ENCODE measurements at regions of chr1 and their contacts with region 1.

Region 1: GRCh38 chr1:27872059-27872801 is at the start of gene THEMIS2:
- DNase-seq: peak; percentile 58 to 86 (median 81)
- ATAC-seq: peak; percentile 83
- H3K4me3 ChIP-seq: peak within 1 kb of the TSS; percentile 83 to 100
- H3K4me3 Mint-ChIP-seq: peak within 1 kb of the TSS; percentile 98
- H3K27ac ChIP-seq: peak within 1 kb of the TSS; percentile 47 to 61
- H3K27ac Mint-ChIP-seq: peak within 1 kb of the TSS; percentile 89
- H3K4me1 ChIP-seq: peaks cover 46% of the 10 kb centered on the region
- H3K4me1 Mint-ChIP-seq: peaks cover 49% of the 10 kb centered on the region
- H3K27me3 ChIP-seq: no peaks in the 10 kb centered on the region
- H3K27me3 Mint-ChIP-seq: no peaks in the 10 kb centered on the region
- CTCF ChIP-seq: no peak
- total RNA-seq, gene THEMIS2: 13.4 to 15.2 TPM

Region 2: GRCh38 chr1:27725374-27726173 is 146.7 kb before region 1 on chr1 and contains the start of gene FAM76A:
- CTCF ChIA-PET with region 1: no interaction called
- POLR2A ChIA-PET with region 1: no interaction called
- intact Hi-C with region 1: no loop called
- DNase-seq: peak; percentile 99 to 100 (median 99)
- ATAC-seq: peak; percentile 92
- H3K4me3 ChIP-seq: peak within 1 kb of the TSS; percentile 63 to 92
- H3K4me3 Mint-ChIP-seq: peak within 1 kb of the TSS; percentile 84
- H3K27ac ChIP-seq: peak within 1 kb of the TSS; percentile 94 to 96
- H3K27ac Mint-ChIP-seq: peak within 1 kb of the TSS; percentile 94
- H3K4me1 ChIP-seq: peaks cover 15% of the 10 kb centered on the region
- H3K4me1 Mint-ChIP-seq: peaks cover 26% of the 10 kb centered on the region
- H3K27me3 ChIP-seq: no peaks in the 10 kb centered on the region
- H3K27me3 Mint-ChIP-seq: no peaks in the 10 kb centered on the region
- CTCF ChIP-seq: peak; percentile 25
- total RNA-seq, gene FAM76A: 29.5 to 31.7 TPM

Region 3: GRCh38 chr1:27772933-27773825 is 99.1 kb before region 1 on chr1 and contains the start of gene STX12:
- CTCF ChIA-PET with region 1: no interaction called
- POLR2A ChIA-PET with region 1: no interaction called
- intact Hi-C with region 1: no loop called
- DNase-seq: peak; percentile 96 to 100 (median 98)
- ATAC-seq: peak; percentile 91
- H3K4me3 ChIP-seq: peak within 1 kb of the TSS; percentile 94 to 98
- H3K4me3 Mint-ChIP-seq: peak within 1 kb of the TSS; percentile 91
- H3K27ac ChIP-seq: peak within 1 kb of the TSS; percentile 76 to 94
- H3K27ac Mint-ChIP-seq: peak within 1 kb of the TSS; percentile 98
- H3K4me1 ChIP-seq: peaks cover 16% of the 10 kb centered on the region
- H3K4me1 Mint-ChIP-seq: peaks cover 37% of the 10 kb centered on the region
- H3K27me3 ChIP-seq: no peaks in the 10 kb centered on the region
- H3K27me3 Mint-ChIP-seq: no peaks in the 10 kb centered on the region
- CTCF ChIP-seq: no peak
- total RNA-seq, gene STX12: 21.0 to 26.0 TPM

Region 4: DNA sequence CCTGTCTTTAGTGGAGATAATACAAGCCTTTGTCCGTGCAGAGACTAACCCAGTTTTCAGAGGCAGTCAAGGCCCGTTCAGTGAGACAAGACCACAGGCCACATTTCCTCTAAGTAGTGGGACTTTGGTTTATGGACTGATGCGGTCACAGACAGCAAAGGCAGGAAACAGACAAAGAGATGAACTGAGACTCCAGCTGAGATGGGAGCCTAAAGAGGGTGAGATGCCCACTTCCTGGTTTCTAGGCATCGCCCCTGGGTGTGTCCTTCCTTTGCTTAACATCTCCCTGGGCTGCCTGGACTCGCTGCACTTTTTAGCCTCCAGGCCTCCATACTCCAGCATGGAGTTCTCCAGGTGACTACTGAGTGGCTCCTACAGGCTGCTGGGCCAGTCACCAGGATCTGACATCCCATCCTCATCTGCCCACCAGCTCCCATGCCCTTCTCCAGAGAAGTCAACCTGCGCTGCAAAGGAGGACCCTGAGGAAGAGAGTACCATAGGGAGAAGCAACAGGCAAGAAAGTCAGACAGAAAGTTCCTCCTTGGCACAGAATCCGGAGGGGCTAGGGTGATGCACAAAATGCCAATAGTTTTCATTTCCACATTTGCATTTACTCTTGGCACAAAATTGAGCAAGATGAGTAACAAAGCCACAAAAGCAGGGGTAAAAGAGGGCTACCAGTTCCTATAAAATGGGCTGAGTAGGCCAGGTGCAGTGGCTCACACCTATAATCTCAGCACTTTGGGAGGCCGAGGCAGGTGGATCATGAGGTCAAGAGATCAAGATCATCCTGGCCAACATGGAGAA is 15.2 kb after region 1 on chr1:
- CTCF ChIA-PET with region 1: interaction called, 4 read pairs
- POLR2A ChIA-PET with region 1: interaction called, 4 read pairs
- intact Hi-C with region 1: loop called in 1 of 2 experiments (anchors 2 kb)
- DNase-seq: peak in 7 of 9 experiments; percentile 12 to 81 (median 49)
- ATAC-seq: peak; percentile 76
- H3K4me3 ChIP-seq: peak overlapping the region in 1 of 2 experiments; percentile 7
- H3K4me3 Mint-ChIP-seq: peak overlapping the region; percentile 66
- H3K27ac ChIP-seq: peak overlapping the region; percentile 29 to 71
- H3K27ac Mint-ChIP-seq: peak overlapping the region; percentile 92
- H3K4me1 ChIP-seq: peaks cover 66% of the 10 kb centered on the region
- H3K4me1 Mint-ChIP-seq: peaks cover 75% of the 10 kb centered on the region
- H3K27me3 ChIP-seq: no peaks in the 10 kb centered on the region
- H3K27me3 Mint-ChIP-seq: no peaks in the 10 kb centered on the region
- CTCF ChIP-seq: no peak

Region 5: GRCh38 chr1:27959400-27960217 is 87.4 kb after region 1 on chr1 and contains the start of gene XKR8:
- CTCF ChIA-PET with region 1: interaction called, 3 read pairs
- POLR2A ChIA-PET with region 1: interaction called, 3 read pairs
- intact Hi-C with region 1: loop called (anchors 1 to 2 kb)
- DNase-seq: peak; percentile 71 to 92 (median 84)
- ATAC-seq: peak; percentile 99
- H3K4me3 ChIP-seq: peak within 1 kb of the TSS; percentile 69 to 81
- H3K4me3 Mint-ChIP-seq: peak within 1 kb of the TSS; percentile 85
- H3K27ac ChIP-seq: peak within 1 kb of the TSS; percentile 65 to 76
- H3K27ac Mint-ChIP-seq: peak within 1 kb of the TSS; percentile 90
- H3K4me1 ChIP-seq: peaks cover 16% of the 10 kb centered on the region
- H3K4me1 Mint-ChIP-seq: peaks cover 32% of the 10 kb centered on the region
- H3K27me3 ChIP-seq: no peaks in the 10 kb centered on the region
- H3K27me3 Mint-ChIP-seq: no peaks in the 10 kb centered on the region
- CTCF ChIP-seq: no peak
- total RNA-seq, gene XKR8: 6.1 to 7.3 TPM